Calu3 (cell line): ENCODE measurements at regions of chr7 and their contacts with region 1.

Region 1: DNA sequence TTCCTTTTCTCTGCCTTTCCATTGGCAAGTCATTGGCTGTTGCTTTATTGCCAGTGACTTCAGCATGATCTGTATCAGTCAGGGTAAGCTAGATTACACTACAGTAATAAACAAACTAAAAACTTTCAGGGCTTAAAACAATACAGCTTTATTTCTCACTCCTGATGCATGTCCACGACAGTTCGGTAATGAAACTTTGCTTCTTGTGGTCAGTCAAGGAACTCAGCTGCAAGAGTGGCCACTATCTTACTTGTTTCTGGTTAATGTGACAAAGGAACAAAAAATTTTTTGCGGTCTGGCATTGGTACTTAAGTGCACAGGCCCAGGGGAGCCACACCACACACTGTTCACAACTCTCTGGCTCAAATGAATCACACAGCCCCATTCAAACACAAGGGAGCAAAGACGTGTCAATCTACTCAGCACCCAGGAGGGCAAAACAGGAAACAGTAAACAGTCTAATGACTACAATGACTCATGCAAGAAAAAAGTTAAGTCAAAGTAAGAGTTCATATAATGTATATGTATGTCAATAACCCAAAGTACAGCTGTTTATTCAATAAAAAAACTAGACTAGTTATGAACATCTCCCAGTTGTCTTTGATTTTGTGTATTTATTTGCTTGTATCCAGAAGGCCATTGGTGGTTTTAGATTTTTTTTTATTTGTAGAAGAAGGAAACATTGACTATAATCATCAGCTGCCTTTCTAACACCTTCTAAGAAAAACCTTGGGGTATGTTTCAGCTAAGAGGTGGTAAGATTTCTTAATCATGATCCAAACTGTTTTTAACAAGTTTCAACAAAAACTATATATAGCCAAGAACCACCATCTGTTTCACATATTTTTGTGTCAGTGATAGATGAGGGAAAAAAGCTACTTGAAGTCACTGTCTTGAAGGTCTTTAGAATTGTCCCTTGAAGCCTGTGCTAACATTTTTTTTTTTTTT is 134.4 kb upstream of the FAM3C start:
- DNase-seq: peak; percentile 80
- H3K4me3 Mint-ChIP-seq: peak overlapping the region; percentile 55
- H3K27ac Mint-ChIP-seq: peak overlapping the region; percentile 98
- H3K4me1 Mint-ChIP-seq: peaks cover 32% of the 10 kb centered on the region
- H3K27me3 Mint-ChIP-seq: no peaks in the 10 kb centered on the region
- CTCF ChIP-seq: no peak

Region 2: DNA sequence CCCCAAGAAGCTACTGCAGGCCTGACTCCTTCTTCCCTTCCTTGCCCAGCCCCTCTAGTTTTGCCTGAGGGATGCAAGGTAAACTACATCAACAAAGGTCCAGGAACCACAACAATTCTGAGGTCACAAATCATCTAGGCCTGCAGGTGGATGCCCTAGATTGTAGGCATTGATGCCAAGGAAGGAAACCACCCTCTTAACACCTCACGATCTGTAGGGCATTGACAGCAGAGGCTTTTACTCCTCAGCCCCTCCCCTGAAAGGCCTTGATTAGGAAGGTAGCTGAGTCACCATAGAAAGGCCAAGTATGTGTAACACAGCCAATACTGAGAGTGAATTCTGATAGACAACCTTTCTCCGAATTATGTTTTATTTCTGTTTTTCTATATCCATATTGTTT is 87.7 kb before region 1 on chr7:
- CTCF ChIA-PET with region 1: no interaction called
- intact Hi-C with region 1: loop called (anchors 5 kb)
- DNase-seq: peak; percentile 47
- H3K4me3 Mint-ChIP-seq: no peak overlapping the region
- H3K27ac Mint-ChIP-seq: no peak overlapping the region
- H3K4me1 Mint-ChIP-seq: peaks cover 23% of the 10 kb centered on the region
- H3K27me3 Mint-ChIP-seq: no peaks in the 10 kb centered on the region
- CTCF ChIP-seq: no peak